Dendritic cell treated with granulocyte-macrophage colony-stimulating factor and Interleukin-4, amounts not matched to agents 40 ng/mL and 50 ng/mL, for 4 days (primary cell): ENCODE measurements at regions of chr2 and their contacts with region 1.

Region 1: GRCh38 chr2:229586746-229587705 is 127.3 kb downstream of the DNER start:
- H3K4me3 Mint-ChIP-seq: no peak overlapping the region
- H3K27ac Mint-ChIP-seq: no peak overlapping the region
- H3K4me1 Mint-ChIP-seq: peaks cover 8% of the 10 kb centered on the region
- H3K27me3 Mint-ChIP-seq: peaks cover 5% of the 10 kb centered on the region

Region 2: DNA sequence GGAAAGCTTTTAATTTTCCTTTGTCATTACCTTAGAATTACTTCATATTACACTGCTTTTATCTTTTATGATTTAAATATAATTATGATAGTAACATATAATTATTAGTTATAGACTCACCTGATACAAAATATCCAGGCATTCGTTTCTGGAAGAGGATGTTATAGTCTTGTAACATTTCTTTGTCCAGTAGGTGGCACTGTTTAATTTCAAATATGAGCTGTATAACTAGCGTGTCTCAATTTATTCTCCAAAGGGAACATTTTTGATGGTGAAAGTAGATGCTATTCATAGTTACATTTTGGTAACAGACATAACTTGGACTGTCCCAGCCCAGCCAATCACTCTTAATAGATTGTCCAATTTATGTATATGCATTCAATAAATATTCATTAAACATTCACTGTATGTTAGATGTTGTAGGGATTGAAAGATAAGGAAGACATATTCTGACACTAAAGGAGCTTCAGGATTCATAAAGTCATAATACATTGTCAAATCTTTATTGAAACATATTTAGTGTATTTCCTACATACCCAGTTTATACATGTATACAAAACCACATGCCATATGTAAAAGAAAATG is 1696.4 kb before region 1 on chr2:
- intact Hi-C with region 1: loop called (anchors 5 kb)
- H3K4me3 Mint-ChIP-seq: no peak overlapping the region
- H3K27ac Mint-ChIP-seq: no peak overlapping the region
- H3K4me1 Mint-ChIP-seq: peaks cover 5% of the 10 kb centered on the region
- H3K27me3 Mint-ChIP-seq: peaks cover 5% of the 10 kb centered on the region

Region 3: DNA sequence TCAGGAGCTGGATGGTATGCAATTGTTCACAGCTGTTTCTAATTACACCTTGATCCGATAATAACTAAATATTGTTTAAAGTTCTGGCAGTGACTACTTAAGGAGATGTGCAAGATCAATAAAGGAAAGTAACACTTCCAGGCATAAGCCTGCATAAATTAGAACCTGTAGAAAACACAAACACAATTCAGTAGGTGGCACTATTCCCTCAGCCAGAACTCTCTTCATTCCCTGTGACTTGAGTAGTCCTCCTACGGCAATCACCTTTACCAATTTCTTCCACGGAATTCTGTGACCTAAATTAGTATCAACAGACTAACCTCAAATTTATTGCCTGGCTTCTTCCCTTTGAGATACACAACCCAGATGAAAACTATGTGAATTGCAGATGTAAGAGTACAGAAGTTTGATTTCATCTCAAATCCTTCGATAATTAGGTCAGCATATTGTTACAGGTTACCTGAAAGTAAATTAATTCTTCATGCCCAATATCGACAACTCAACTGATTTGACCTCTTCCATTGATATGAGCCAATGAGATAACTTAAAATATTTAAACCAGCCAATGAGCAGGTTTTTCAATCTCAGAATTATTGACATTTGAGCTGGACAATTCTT is 453.8 kb before region 1 on chr2:
- intact Hi-C with region 1: loop called (anchors 1 kb)
- H3K4me3 Mint-ChIP-seq: no peak overlapping the region
- H3K27ac Mint-ChIP-seq: no peak overlapping the region
- H3K4me1 Mint-ChIP-seq: no peaks in the 10 kb centered on the region
- H3K27me3 Mint-ChIP-seq: peaks cover 2% of the 10 kb centered on the region

Region 4: GRCh38 chr2:229342376-229342775 is 244.7 kb before region 1 on chr2:
- intact Hi-C with region 1: loop called (anchors 5 kb)
- H3K4me3 Mint-ChIP-seq: no peak overlapping the region
- H3K27ac Mint-ChIP-seq: no peak overlapping the region
- H3K4me1 Mint-ChIP-seq: peaks cover 33% of the 10 kb centered on the region
- H3K27me3 Mint-ChIP-seq: peaks cover 31% of the 10 kb centered on the region

Region 5: DNA sequence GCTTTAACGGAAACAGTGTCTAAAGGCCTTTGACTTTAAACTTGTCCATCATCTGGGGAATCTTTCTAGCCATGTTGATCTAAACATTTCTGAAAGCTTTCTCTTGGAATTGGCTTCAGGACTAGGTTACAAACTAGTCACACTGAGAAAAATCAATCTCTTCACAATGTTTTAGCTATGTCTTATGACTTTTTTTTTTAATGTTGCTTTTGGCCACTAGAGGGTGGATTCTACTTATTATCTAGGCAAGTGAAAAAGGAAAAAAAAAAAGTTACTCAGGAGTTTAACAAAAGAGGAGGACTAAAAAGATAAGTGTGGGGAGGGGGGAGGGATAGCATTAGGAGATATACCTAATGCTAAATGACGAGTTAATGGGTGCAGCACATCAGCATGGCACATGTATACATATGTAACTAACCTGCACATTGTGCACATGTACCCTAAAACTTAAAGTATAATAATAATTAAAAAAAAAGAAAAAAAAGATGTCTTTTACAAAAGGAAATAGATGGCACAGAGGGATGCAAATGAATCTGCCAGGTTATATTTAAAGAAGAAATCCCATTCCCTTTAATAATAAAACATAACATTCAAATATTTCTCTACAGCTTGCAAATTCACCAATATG is 155.6 kb before region 1 on chr2:
- intact Hi-C with region 1: loop called (anchors 5 kb)
- H3K4me3 Mint-ChIP-seq: no peak overlapping the region
- H3K27ac Mint-ChIP-seq: no peak overlapping the region
- H3K4me1 Mint-ChIP-seq: no peaks in the 10 kb centered on the region
- H3K27me3 Mint-ChIP-seq: peaks cover 34% of the 10 kb centered on the region